Heart right ventricle (tissue), 16 donors: ENCODE measurements at regions of chr1 and their contacts with region 1.

Region 1: DNA sequence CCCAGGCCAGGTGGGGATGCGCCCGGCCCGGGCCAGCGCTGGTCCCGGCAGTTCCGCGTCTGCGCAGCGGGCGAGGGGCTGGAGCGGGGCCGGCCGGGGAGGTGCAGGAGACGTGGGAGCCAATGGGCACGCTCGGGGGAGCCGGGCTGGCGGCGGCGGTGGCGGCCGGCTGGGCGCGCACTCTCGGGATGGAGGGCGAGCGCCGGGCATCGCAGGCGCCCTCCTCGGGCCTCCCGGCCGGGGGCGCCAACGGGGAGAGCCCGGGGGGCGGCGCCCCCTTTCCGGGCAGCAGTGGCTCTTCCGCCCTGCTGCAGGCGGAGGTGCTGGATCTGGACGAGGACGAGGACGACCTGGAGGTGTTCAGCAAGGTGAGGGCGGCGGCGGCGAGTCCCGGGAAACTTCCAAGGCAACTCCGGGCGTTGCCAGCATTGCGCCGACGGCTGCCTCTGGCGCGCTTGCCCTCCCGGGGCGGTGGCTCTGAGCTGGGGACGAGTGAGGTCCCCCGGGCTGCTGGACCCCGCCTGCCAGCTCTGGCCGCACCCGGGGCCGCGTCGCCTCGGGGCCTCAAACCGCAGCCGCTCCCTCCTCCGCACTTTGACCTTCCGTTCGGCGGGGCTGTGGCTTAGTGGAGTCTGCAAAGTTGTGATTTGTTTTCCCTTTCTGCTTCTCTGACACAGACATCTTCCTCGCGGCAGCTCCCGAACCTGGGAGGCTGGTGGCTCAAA is at the start of gene SNX7:
- DNase-seq: peak; percentile 79 to 87
- ATAC-seq: peak; percentile 96 to 99 (median 97)
- H3K4me3 ChIP-seq: peak within 1 kb of the TSS; percentile 68 to 96 (median 88)
- H3K27ac ChIP-seq: peak within 1 kb of the TSS; percentile 66 to 91 (median 84)
- H3K4me1 ChIP-seq: peaks cover 0 to 23% (median 20%) of the 10 kb centered on the region in 9 donors
- H3K27me3 ChIP-seq: peaks cover 0 to 27% (median 0%) of the 10 kb centered on the region in 7 donors
- CTCF ChIP-seq: peak in 7 of 9 donors; percentile 10 to 57 (median 27)
- total RNA-seq, gene SNX7: 9.8 to 23.1 (median 15.2) TPM

Region 2: DNA sequence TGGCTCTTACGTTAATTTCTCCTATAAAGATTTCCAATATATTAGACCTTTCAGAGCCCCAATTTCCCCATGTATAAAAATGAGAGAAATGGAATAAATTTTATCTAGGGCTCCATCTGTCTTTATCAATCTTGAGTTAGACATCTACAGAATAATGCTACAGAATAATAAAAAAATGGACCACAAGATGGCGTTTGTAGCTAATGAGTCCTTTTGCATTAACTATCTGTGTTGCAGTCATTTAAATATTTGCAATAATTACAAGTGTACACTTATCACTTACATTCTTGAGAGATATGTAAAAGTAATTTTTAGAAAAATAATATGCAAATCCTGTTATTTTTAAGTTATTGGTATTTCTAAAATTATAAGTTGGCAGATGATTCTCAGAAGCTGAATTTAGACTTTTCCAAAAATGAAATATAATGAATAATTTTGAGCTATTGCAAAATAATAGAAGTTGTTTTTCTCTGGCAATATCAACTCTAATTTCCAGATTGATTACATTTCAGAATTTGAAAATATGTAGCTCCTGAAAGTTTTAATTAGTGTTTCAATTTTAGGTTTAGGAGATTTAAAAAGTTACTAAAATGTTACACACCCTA is 87.5 kb after region 1 on chr1:
- intact Hi-C with region 1: loop called in 1 of 10 experiments (anchors 10 kb)
- DNase-seq: no peak
- ATAC-seq: no peak
- H3K4me3 ChIP-seq: no peak overlapping the region
- H3K27ac ChIP-seq: no peak overlapping the region
- H3K4me1 ChIP-seq: no peaks in the 10 kb centered on the region
- H3K27me3 ChIP-seq: no peaks in the 10 kb centered on the region
- CTCF ChIP-seq: peak in 7 of 9 donors; percentile 34 to 56 (median 44)

Region 3: DNA sequence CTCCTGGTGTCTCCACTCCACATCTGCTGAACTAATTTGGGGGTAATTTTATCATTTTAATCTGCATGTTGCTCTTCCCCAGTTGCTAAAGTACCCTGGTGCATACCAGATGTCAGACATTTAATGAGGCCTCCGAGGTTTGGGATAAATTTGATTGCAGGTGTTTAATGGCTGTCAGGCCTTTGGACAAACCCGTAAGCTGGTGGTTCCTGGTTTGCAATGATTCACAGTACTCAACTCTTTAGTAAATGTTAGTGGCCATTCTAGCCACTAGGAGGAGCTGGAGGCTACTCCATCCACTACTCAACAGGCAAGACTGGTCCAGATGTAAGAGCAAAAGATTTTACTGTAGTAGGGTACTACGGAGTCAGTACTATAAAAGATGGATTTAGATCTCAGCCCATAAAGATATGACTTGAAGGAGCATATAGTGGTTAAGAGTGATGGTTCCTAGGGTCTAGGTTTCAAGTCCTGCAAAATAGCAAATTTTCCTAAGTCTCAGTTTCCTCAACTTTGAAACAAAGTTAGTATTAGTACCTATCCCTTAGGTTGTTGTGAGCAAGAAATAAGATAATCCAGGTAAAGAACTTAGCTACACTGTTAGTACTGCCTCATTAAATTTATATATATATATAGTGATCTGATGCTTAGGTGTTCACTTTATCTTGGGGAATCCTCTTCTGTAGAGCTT is 132.6 kb after region 1 on chr1:
- intact Hi-C with region 1: no loop called
- DNase-seq: peak in 1 of 2 donors; percentile 30
- ATAC-seq: peak in 7 of 8 donors; percentile 43 to 70 (median 65)
- H3K4me3 ChIP-seq: no peak overlapping the region
- H3K27ac ChIP-seq: no peak overlapping the region
- H3K4me1 ChIP-seq: no peaks in the 10 kb centered on the region
- H3K27me3 ChIP-seq: no peaks in the 10 kb centered on the region
- CTCF ChIP-seq: peak; percentile 34 to 77 (median 70)

Region 4: DNA sequence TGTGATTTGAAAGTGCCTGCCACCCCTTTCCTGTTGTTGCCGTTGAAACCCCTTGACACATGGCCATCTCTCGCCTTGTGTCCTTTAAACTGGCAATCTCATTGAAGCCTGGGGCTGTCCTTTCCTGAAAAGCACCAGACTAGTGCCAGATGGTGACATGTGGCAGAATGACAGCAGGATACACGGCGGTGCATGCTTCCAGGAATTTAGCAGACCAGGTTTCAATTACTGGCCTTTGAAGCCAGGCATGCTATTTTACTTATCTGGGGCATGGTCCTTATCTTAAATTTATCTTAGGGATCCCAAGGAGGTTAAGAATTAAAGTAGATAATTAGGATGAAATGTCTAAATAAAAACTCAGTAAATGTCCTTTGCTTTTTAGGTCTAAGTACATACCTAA is 617.8 kb after region 1 on chr1:
- intact Hi-C with region 1: no loop called
- DNase-seq: no peak
- ATAC-seq: no peak
- H3K4me3 ChIP-seq: no peak overlapping the region
- H3K27ac ChIP-seq: no peak overlapping the region
- H3K4me1 ChIP-seq: peaks cover 0 to 8% (median 0%) of the 10 kb centered on the region in 9 donors
- H3K27me3 ChIP-seq: no peaks in the 10 kb centered on the region
- CTCF ChIP-seq: no peak